HCT116 (cell line): ENCODE measurements at regions of chr13 and their contacts with region 1.

Region 1: GRCh38 chr13:60627071-60627686 is 230.2 kb downstream of the TDRD3 start:
- DNase-seq: peak; percentile 19
- ATAC-seq: peak; percentile 87
- H3K4me3 ChIP-seq: no peak overlapping the region
- H3K27ac ChIP-seq: no peak overlapping the region
- H3K4me1 ChIP-seq: no peaks in the 10 kb centered on the region
- H3K27me3 ChIP-seq: peaks cover 16% of the 10 kb centered on the region
- CTCF ChIP-seq: peak; percentile 29 to 79 (median 70); a peak in 5 of 6 replicates
- POLR2A ChIP-seq: no peak
- RAD21 ChIP-seq: peak; percentile 69

Region 2: DNA sequence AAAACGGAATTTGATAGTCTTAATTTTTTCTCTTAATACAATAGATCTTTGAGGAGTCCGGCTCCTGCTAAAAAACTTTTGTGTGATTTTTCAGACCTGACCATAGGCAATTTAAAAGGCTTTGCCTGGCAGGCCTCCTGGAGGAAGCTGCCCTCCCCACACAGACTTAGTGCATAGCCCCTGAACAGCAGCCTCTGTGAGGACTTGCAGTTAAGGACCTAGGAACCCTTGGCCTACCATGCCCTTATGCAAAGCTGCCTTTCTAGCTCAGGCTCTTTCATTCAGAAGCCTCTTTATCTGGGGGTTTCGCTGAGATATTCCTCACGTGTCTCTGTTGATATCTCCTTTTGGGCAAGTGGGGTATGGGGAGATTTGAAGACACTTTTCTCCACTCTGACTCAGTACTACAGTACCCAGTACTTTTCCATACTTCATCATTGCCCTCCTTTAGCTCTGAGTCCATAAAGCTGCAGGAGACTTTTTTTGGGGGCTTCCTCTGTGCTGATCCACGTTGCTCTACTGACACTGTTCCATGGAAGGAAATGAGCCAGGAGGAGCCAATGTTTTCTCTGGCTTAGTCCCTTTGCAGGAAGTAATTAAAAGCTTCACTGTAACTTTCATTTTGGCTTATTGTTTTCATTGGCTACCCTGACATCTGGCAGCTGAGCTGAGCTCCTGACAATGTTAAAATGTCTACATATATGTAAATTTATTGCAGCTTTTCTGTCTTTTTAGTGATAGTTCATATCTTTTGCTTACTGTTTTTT is 52.9 kb after region 1 on chr13:
- CTCF ChIA-PET with region 1: interaction called, 8 read pairs
- POLR2A ChIA-PET with region 1: no interaction called
- RAD21 ChIA-PET with region 1: no interaction called
- intact Hi-C with region 1: loop called (anchors 1 kb)
- DNase-seq: no peak
- ATAC-seq: no peak
- H3K4me3 ChIP-seq: no peak overlapping the region
- H3K27ac ChIP-seq: no peak overlapping the region
- H3K4me1 ChIP-seq: no peaks in the 10 kb centered on the region
- H3K27me3 ChIP-seq: no peaks in the 10 kb centered on the region; the same call in 1 of the 2 replicates
- CTCF ChIP-seq: no peak
- POLR2A ChIP-seq: no peak
- RAD21 ChIP-seq: no peak

Region 3: DNA sequence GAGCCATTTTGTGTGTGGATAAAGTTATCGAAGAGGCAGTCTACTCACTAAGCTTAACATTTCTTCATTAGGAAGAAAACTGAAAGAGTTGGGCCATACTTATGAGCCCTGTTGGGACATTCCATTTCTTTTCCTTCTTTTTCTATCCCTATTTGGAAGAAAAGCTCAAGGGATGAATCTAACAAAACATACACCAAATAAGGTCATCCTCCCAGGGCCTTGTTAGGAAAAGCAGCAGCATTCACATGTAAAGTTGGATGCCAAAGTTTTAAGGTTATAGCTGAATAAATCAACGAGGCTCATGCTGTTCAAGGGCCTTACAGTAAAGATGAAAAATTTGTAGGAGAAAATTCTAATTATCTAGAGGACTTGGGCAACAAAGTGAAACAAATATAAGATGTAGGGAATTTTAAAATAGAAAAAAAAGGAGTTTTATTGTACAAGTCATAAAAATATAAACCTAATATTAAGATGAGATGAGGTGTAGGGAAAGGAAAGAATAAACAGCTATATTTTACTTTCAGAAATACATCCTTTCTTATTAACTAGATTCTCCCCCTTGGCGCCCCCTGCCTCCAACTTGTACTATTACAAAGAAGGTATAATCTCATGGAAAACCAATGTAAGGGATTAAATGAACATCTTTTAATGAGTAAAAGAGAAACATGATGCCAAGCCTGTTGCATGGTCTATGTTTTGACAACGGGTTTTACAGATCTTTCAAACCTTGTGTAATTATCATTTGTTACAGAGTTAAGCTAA is 628.0 kb after region 1 on chr13:
- CTCF ChIA-PET with region 1: no interaction called
- POLR2A ChIA-PET with region 1: no interaction called
- RAD21 ChIA-PET with region 1: no interaction called
- intact Hi-C with region 1: loop called (anchors 5 kb)
- DNase-seq: peak; percentile 2
- ATAC-seq: no peak
- H3K4me3 ChIP-seq: no peak overlapping the region
- H3K27ac ChIP-seq: no peak overlapping the region
- H3K4me1 ChIP-seq: no peaks in the 10 kb centered on the region
- H3K27me3 ChIP-seq: no peaks in the 10 kb centered on the region
- CTCF ChIP-seq: peak in 1 of 3 experiments; percentile 37; a peak in 2 of 6 replicates
- POLR2A ChIP-seq: no peak
- RAD21 ChIP-seq: no peak

Region 4: GRCh38 chr13:61410669-61411297 is 783.6 kb after region 1 on chr13:
- CTCF ChIA-PET with region 1: interaction called, 3 read pairs
- POLR2A ChIA-PET with region 1: no interaction called
- RAD21 ChIA-PET with region 1: no interaction called
- intact Hi-C with region 1: loop called (anchors 1 kb)
- DNase-seq: peak; percentile 2
- ATAC-seq: no peak
- H3K4me3 ChIP-seq: no peak overlapping the region
- H3K27ac ChIP-seq: no peak overlapping the region
- H3K4me1 ChIP-seq: no peaks in the 10 kb centered on the region
- H3K27me3 ChIP-seq: no peaks in the 10 kb centered on the region
- CTCF ChIP-seq: peak; percentile 37 to 44 (median 41); a peak in 4 of 6 replicates
- POLR2A ChIP-seq: no peak
- RAD21 ChIP-seq: peak; percentile 42; the same call in 1 of the 2 replicates

Region 5: GRCh38 chr13:61954092-61954491 is 1326.9 kb after region 1 on chr13:
- CTCF ChIA-PET with region 1: interaction called, 11 read pairs
- POLR2A ChIA-PET with region 1: no interaction called
- RAD21 ChIA-PET with region 1: no interaction called
- intact Hi-C with region 1: loop called (anchors 5 kb)
- DNase-seq: peak; percentile 19
- ATAC-seq: 0 out of 2 replicates have a peak, but pooled peaks have one; percentile 42
- H3K4me3 ChIP-seq: no peak overlapping the region
- H3K27ac ChIP-seq: no peak overlapping the region
- H3K4me1 ChIP-seq: no peaks in the 10 kb centered on the region
- H3K27me3 ChIP-seq: no peaks in the 10 kb centered on the region
- CTCF ChIP-seq: peak; percentile 7 to 61 (median 20); a peak in 4 of 6 replicates
- POLR2A ChIP-seq: no peak
- RAD21 ChIP-seq: peak; percentile 60